Endothelial cell of umbilical vein (primary cell): ENCODE measurements at regions of chr11 and their contacts with region 1.

Region 1: GRCh38 chr11:72430741-72431570 is 3.4 kb downstream of the CLPB start:
- DNase-seq: peak; percentile 52
- H3K4me3 ChIP-seq: no peak overlapping the region
- H3K27ac ChIP-seq: no peak overlapping the region
- H3K4me1 ChIP-seq: peaks cover 4% of the 10 kb centered on the region
- H3K27me3 ChIP-seq: no peaks in the 10 kb centered on the region
- CTCF ChIP-seq: peak; percentile 57 to 79
- POLR2A ChIP-seq: no peak

Region 2: DNA sequence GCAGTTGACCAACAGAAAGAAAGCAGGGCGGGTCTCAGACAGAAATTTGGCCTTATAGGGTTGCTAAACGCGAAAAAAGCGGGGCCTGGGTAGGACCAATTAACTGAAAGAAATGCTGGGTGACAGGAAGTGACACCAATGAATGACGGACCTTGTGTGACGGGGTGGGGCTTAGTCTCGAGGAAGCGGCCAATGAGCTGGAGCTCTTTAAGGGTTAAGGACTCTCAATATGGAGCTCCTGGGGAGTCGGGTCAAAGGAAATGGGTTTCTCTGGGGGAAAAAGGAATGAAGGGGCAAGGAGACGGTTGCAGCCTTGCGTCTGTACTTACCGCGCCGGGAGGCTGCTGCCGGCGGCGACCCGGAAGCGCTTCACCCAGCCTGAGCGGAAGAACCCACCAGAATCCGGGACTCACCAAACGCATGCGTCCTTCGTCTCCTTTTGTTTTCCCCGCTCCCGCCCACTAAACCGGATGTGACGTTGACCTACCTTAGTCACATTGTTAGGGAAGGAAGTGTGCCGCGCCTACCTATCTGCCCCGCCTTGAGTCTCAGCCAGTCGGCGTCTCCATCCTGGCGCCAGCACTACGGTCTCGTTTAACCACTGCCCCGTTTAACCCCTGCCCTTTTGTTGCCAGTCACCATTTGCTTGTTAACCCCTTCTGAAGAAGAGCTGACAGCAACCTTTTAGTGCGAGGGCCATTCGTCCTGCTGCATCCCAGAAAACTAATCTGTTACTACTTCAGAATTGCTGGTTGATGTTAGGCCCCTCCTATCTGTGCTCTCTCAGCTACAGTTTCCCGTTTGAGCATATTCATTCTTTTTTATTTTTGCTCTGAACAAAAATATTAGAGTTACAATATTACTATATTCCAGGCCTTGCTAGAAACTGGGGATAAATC is 318.4 kb before region 1 on chr11 and contains the start of gene ANAPC15:
- CTCF ChIA-PET with region 1: interaction called, 3 read pairs
- POLR2A ChIA-PET with region 1: no interaction called
- dilution Hi-C with region 1: no loop called
- intact Hi-C with region 1: loop called (anchors 5 kb)
- DNase-seq: peak; percentile 100
- H3K4me3 ChIP-seq: peak within 1 kb of the TSS; percentile 14 to 69 (median 53)
- H3K27ac ChIP-seq: peak within 1 kb of the TSS; percentile 90
- H3K4me1 ChIP-seq: peaks cover 14% of the 10 kb centered on the region
- H3K27me3 ChIP-seq: peaks cover 0 to 3% of the 10 kb centered on the region in 2 experiments
- CTCF ChIP-seq: no peak
- POLR2A ChIP-seq: peak; percentile 99
- total RNA-seq, gene ANAPC15: 67.0 and 72.4 TPM in 2 replicates

Region 3: DNA sequence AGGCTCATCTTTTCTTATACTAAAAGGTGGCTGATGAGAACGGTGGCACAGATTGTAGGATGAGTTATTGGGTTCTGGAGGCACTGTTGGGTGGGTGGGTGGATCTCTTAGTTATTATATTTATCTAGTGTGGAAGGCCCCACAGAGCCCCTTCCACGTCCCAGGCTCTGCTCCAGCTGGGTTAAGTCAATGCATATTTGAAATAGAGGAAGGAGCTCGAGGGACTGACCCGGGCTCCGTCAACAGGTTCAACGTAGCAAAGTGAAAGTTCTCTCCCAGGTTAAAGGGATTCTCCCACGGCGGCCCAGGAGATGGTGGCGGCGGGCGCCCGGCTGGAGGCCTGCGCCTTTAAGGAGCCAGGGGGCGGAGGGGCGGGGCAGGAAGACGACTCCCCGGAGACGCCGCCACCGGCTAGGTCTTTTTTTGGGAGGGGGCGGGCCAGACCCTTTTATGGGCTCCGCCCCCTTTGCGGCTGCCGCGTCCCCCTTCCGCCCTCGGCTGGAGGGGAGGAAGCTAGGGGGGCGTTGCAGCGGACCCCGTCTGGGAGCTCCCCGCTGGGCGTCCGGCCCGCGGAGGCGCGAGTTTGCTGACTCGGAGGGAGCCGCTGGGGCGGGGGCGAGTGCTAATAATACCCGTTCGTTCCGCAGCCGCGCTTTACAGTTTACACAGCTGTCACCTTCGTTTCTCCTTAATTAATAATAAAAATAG is 207.9 kb before region 1 on chr11:
- CTCF ChIA-PET with region 1: interaction called, 17 read pairs
- POLR2A ChIA-PET with region 1: no interaction called
- dilution Hi-C with region 1: no loop called
- intact Hi-C with region 1: no loop called
- DNase-seq: peak; percentile 93
- H3K4me3 ChIP-seq: peak overlapping the region; percentile 62 to 94 (median 70)
- H3K27ac ChIP-seq: peak overlapping the region; percentile 60
- H3K4me1 ChIP-seq: peaks cover 9% of the 10 kb centered on the region
- H3K27me3 ChIP-seq: peaks cover 4 to 7% of the 10 kb centered on the region in 2 experiments
- CTCF ChIP-seq: peak in 1 of 2 donors; percentile 16
- POLR2A ChIP-seq: no peak

Region 4: GRCh38 chr11:72293910-72294615 is 136.9 kb before region 1 on chr11:
- CTCF ChIA-PET with region 1: interaction called, 39 read pairs
- POLR2A ChIA-PET with region 1: no interaction called
- dilution Hi-C with region 1: no loop called
- intact Hi-C with region 1: loop called (anchors 5 kb)
- DNase-seq: no peak
- H3K4me3 ChIP-seq: no peak overlapping the region
- H3K27ac ChIP-seq: no peak overlapping the region
- H3K4me1 ChIP-seq: no peaks in the 10 kb centered on the region
- H3K27me3 ChIP-seq: no peaks in the 10 kb centered on the region
- CTCF ChIP-seq: no peak
- POLR2A ChIP-seq: no peak

Region 5: DNA sequence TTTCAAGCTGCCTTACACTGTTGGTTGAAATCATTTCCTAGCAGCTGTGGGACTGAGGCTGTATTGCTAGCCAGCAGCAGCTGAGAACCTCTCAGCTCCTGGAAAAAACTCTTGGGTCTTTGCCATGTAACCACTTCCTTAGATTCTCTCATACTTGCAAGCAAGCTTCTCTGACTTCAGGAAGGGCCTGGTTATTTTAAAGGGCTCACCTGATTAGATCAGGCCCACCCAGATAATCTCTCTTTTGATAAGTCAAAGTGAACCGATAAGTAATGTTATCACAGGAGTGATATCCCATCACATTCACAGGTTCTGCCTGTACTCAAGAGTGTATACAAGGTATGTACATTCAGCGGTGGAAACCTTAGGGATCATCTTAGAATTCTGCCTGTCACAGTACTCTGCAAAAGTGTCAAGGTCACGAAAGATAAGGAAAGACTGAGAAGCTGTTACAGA is 10.8 kb after region 1 on chr11:
- CTCF ChIA-PET with region 1: interaction called, 19 read pairs
- POLR2A ChIA-PET with region 1: no interaction called
- dilution Hi-C with region 1: no loop called
- intact Hi-C with region 1: no loop called
- DNase-seq: peak; percentile 72
- H3K4me3 ChIP-seq: no peak overlapping the region
- H3K27ac ChIP-seq: no peak overlapping the region
- H3K4me1 ChIP-seq: no peaks in the 10 kb centered on the region
- H3K27me3 ChIP-seq: peaks cover 3 to 6% of the 10 kb centered on the region in 2 experiments
- CTCF ChIP-seq: no peak
- POLR2A ChIP-seq: no peak

Region 6: DNA sequence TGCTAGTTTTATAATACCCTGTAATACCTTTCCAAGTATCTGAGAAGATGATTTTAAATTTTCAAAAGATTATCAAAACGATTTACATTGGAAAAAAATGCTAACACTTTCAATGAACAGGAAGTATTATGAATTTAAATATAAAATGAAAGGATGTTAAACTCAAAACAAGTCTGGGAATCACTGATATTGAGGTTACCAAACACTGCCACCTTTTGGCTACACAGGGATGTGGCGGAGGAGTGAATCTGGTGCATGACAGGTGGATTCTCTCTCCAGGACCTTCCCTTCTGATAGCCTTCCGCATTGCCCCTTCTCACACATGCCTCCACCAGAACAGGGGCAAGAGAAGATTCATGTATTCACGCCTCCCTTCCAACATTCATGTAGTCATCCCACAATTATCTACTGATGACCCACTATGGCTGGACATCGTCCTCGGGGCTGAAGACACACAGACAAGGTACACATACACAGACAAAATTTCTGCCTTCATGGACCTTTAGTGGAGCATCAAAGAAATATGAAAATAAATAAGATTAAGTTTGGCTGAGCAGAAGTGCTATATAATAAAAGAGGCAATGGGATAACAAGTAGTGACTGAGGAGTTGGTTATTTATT is 418.0 kb after region 1 on chr11:
- CTCF ChIA-PET with region 1: no interaction called
- POLR2A ChIA-PET with region 1: no interaction called
- dilution Hi-C with region 1: no loop called
- intact Hi-C with region 1: no loop called
- DNase-seq: peak; percentile 59
- H3K4me3 ChIP-seq: no peak overlapping the region
- H3K27ac ChIP-seq: no peak overlapping the region
- H3K4me1 ChIP-seq: no peaks in the 10 kb centered on the region
- H3K27me3 ChIP-seq: no peaks in the 10 kb centered on the region
- CTCF ChIP-seq: peak; percentile 58 to 62
- POLR2A ChIP-seq: no peak